T-cell (primary cell): ENCODE measurements at regions of chr5 and their contacts with region 1.

Region 1: DNA sequence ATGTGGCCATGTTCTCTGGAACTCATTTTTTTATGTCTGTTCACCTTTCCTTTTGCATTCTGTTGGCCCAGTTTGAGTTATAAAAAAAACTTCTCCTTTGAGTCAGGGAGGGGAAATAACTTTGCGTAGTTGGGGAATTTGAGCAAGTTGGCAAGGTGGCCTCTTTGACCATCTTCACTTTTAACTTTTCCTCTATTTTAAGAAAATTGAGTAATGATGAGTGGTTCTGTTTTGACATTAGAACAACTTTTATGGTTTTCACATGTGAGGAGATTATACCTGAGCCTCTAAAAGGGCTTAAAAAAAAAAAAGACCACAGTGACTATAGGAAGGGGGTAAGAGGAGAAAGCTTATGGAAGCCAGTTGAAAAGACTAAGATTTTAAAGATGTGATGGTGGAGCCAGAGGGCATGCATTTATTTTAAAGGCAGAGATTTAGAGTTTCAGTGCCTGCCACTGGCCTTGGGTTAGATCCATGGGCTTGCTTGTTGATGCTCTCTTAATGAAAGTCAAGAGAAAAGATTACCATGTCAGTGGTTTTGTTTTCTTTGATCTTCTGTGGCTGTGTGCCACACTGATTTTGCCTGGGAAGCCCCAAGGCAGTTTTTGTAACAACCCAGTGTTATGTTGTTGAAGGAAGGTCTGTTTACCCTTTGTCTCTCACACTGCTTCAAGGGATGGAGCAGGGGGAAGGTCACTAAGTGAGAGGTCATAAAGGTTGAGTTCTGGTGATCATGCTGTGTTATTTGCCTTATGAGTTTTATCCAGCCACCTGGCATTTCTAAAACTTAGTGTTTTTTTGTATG is 219.7 kb upstream of the CD180 start:
- DNase-seq: peak in 22 of 35 experiments; percentile 0 to 48 (median 4)
- ATAC-seq: peak in 2 of 4 experiments; percentile 26 to 84
- H3K4me3 ChIP-seq: no peak overlapping the region
- H3K4me3 Mint-ChIP-seq: no peak overlapping the region
- H3K27ac ChIP-seq: no peak overlapping the region
- H3K27ac Mint-ChIP-seq: no peak overlapping the region
- H3K4me1 ChIP-seq: peaks cover 0 to 3% of the 10 kb centered on the region in 2 experiments
- H3K4me1 Mint-ChIP-seq: peaks cover 11 to 15% (median 12%) of the 10 kb centered on the region in 3 donors
- H3K27me3 ChIP-seq: no peaks in the 10 kb centered on the region
- H3K27me3 Mint-ChIP-seq: no peaks in the 10 kb centered on the region

Region 2: DNA sequence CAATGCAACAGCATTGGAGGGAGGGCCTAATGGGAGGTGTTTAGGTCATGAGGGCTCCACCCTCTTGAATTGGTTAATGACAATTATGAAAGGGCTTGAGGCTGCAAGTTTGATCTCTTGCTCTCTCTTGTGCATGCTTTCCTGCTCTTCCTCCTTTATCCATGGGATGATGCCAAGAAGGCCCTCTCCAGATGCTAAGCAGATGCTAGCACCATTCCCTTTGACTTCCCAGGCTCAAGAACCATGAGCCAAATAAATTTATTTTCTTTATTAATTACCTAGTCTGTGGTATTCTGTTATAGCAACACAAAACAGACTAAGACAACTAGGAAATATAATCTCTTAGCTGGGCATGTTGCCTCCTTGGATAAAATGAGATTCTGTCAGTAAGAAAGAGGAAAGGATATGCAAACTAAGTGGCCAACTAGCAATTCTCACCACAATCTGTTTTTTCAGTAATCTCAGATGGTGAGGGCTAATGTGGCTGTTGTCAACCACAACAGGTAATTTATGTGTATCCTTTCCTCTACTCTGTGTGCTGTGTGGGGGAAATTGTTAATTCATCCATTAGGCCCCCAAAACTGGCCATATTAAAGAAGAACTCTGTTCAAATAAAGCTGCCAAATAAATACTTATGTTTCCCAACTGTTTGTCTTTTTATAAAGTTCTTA is 49.3 kb after region 1 on chr5:
- CTCF ChIA-PET with region 1: no interaction called
- POLR2A ChIA-PET with region 1: interaction called in 1 of 2 experiments, 12 read pairs
- DNase-seq: no peak
- ATAC-seq: no peak
- H3K4me3 ChIP-seq: no peak overlapping the region
- H3K4me3 Mint-ChIP-seq: no peak overlapping the region
- H3K27ac ChIP-seq: no peak overlapping the region
- H3K27ac Mint-ChIP-seq: no peak overlapping the region
- H3K4me1 ChIP-seq: no peaks in the 10 kb centered on the region
- H3K4me1 Mint-ChIP-seq: no peaks in the 10 kb centered on the region
- H3K27me3 ChIP-seq: no peaks in the 10 kb centered on the region
- H3K27me3 Mint-ChIP-seq: no peaks in the 10 kb centered on the region